Naive thymus-derived CD4-positive, alpha-beta T cell (primary cell): ENCODE measurements at regions of chr11 and their contacts with region 1.

Region 1: DNA sequence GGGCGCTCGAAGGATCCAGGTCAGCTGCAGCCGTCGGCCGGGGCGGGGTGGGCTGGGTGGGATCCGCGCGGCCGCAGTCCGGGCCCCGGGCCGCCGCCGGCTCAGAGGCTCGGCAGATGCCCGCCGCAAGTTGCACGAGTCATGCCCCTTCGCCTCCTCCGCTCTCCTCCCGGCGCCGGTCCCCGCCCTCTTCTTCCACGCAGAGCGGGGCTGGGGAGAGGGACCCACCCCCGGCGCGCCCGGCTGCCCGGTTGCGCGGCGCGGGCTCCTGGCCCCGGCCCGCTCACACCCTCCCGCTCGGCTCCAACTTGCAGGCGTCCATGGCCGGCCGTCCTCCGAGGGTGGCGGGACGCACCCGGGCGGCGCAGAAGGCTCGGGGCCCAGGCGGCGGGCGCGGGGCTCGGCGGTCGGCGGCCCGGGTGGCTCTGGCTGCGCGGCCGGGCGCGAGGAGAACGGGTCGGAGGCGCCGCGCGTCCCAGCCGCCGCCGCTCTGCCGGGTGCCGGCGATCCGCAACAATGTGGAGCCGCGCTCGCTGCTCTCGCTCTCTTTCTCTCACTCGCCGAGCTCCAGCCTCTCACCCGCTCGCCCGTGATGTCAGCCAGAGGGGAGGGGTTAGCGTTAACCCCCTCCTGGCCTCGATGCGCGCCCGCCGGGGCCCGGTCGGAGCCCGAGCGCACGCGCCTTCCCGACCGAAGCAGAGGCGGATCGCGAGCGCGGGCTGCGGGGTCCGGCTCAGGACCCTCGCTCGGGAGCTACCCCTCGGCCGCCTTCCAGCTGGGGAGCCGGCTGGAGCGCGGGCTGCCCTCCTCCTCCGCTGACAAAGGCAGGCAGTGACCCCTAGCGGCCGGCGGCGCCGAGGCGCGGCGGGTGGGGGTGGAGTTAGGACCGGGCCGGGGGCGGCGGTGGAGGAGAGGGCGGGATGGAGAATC is at the start of gene NECTIN1:
- DNase-seq: peak; percentile 75 to 93 (median 85)
- ATAC-seq: peak; percentile 93
- H3K4me3 ChIP-seq: peak within 1 kb of the TSS; percentile 69
- H3K4me3 Mint-ChIP-seq: peak within 1 kb of the TSS; percentile 87 to 97 (median 94)
- H3K27ac ChIP-seq: peak within 1 kb of the TSS; percentile 58
- H3K27ac Mint-ChIP-seq: peak within 1 kb of the TSS; percentile 34 to 87 (median 67)
- H3K4me1 ChIP-seq: peaks cover 17 to 21% of the 10 kb centered on the region in 2 donors
- H3K4me1 Mint-ChIP-seq: peaks cover 0 to 17% (median 13%) of the 10 kb centered on the region in 7 donors
- H3K27me3 ChIP-seq: peaks cover 0 to 4% of the 10 kb centered on the region in 2 donors
- H3K27me3 Mint-ChIP-seq: peaks cover 8 to 73% (median 17%) of the 10 kb centered on the region in 5 donors
- total RNA-seq, gene NECTIN1: 0.87 to 4.2 (median 2.4) TPM

Region 2: DNA sequence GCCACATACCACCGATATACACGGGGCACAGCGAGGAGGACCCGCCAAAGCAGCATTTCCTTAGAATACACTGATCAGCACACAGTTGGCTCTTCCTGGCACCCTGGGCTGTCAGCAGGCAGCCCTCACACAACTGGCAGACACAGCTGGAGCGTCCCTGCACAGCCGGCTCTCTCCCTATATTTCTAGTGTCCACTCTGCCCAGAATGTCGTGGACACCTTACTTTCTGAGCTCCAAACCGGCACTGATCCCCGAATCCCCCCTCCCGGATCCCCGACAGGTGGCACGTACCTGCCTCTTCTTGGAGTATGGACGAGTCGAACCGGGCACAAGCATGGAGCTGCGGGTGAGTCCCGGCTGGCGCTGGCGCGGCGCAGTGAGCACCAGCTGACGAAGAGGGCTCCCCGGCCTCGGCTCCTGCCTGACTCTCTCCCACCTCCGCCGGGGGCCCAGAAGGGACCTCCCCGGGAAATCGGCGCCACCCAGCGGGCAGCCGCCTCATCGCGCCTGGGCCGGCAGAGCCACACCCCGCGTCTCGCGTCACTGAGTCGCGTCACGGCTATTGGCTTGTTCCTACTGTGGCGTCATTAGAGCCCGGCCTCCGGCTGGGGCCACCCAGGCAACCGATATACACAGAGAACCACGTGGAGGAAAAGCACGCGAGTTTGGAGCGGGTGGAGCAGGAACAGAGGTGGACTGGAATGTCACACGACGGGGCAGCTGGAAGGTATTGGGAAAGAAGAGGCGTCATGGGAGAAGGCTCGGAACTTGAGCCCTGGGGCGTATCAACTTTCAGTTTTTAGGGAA is 347.5 kb before region 1 on chr11 and contains the start of gene USP2:
- CTCF ChIA-PET with region 1: no interaction called
- POLR2A ChIA-PET with region 1: no interaction called
- intact Hi-C with region 1: loop called in 1 of 2 experiments (anchors 1 kb)
- DNase-seq: peak; percentile 94 to 98 (median 97)
- ATAC-seq: peak; percentile 99
- H3K4me3 ChIP-seq: peak within 1 kb of the TSS; percentile 81
- H3K4me3 Mint-ChIP-seq: no peak within 1 kb of the TSS
- H3K27ac ChIP-seq: peak within 1 kb of the TSS; percentile 71
- H3K27ac Mint-ChIP-seq: peak within 1 kb of the TSS in 1 of 9 donors; percentile 87
- H3K4me1 ChIP-seq: peaks cover 9 to 14% of the 10 kb centered on the region in 2 donors
- H3K4me1 Mint-ChIP-seq: peaks cover 0 to 13% (median 5%) of the 10 kb centered on the region in 7 donors
- H3K27me3 ChIP-seq: no peaks in the 10 kb centered on the region
- H3K27me3 Mint-ChIP-seq: peaks cover 0 to 9% (median 0%) of the 10 kb centered on the region in 5 donors
- total RNA-seq, gene USP2: 0.07 to 1.1 (median 0.43) TPM

Region 3: GRCh38 chr11:119624102-119624615 is 104.8 kb before region 1 on chr11:
- CTCF ChIA-PET with region 1: interaction called, 4 read pairs
- POLR2A ChIA-PET with region 1: no interaction called
- intact Hi-C with region 1: loop called (anchors 1 kb)
- DNase-seq: no peak
- ATAC-seq: no peak
- H3K4me3 ChIP-seq: no peak overlapping the region
- H3K4me3 Mint-ChIP-seq: no peak overlapping the region
- H3K27ac ChIP-seq: no peak overlapping the region
- H3K27ac Mint-ChIP-seq: no peak overlapping the region
- H3K4me1 ChIP-seq: no peaks in the 10 kb centered on the region
- H3K4me1 Mint-ChIP-seq: peaks cover 0 to 3% (median 0%) of the 10 kb centered on the region in 7 donors
- H3K27me3 ChIP-seq: no peaks in the 10 kb centered on the region
- H3K27me3 Mint-ChIP-seq: peaks cover 0 to 24% (median 10%) of the 10 kb centered on the region in 5 donors

Region 4: GRCh38 chr11:119666463-119667131 is 62.3 kb before region 1 on chr11:
- CTCF ChIA-PET with region 1: no interaction called
- POLR2A ChIA-PET with region 1: no interaction called
- intact Hi-C with region 1: loop called (anchors 1 kb)
- DNase-seq: peak in 8 of 9 donors; percentile 11 to 62 (median 44)
- ATAC-seq: peak; percentile 87
- H3K4me3 ChIP-seq: no peak overlapping the region
- H3K4me3 Mint-ChIP-seq: no peak overlapping the region
- H3K27ac ChIP-seq: no peak overlapping the region
- H3K27ac Mint-ChIP-seq: no peak overlapping the region
- H3K4me1 ChIP-seq: no peaks in the 10 kb centered on the region
- H3K4me1 Mint-ChIP-seq: peaks cover 0 to 5% (median 0%) of the 10 kb centered on the region in 7 donors
- H3K27me3 ChIP-seq: no peaks in the 10 kb centered on the region
- H3K27me3 Mint-ChIP-seq: no peaks in the 10 kb centered on the region

Region 5: DNA sequence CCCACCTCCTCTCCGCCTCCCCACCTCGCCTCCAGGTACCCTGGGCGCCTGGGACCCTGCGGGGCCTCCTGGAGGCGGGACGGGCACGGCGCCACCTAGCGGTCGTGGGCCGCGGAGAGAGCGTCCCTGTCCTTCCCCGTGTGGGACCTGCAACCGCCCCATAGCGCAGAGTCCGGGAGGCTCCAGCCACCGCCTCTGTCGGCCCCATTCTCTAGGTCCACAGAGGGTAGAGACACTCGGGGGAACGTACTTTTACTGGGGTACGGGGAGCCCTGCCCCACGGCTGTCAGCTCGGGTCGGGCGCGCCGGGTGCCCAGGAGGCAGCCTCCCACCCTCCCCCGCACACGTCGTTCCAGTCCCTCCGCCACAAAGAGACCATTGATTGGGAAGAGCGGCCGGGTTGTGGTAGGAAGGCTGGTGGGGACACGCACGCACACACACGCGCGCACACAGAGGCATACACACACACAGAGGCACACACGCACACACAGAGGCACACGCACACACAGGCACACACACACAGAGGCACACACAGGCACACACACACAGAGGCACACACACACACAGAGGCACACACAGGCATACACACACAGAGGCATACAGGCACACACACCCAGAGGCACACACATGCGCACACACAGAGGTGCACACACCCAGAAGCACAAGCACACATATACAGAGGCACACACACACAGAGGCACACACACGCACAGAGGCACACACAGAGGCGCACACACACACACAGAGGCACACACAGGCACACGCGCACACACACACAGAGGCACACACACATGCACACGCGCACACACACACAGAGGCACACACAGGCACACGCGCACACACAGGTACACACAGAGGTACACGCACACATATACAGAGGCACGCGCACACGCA is 12.7 kb after region 1 on chr11:
- CTCF ChIA-PET with region 1: interaction called, 7 read pairs
- POLR2A ChIA-PET with region 1: no interaction called
- intact Hi-C with region 1: loop called in 1 of 2 experiments (anchors 1 kb)
- DNase-seq: peak in 7 of 9 donors; percentile 42 to 71 (median 57)
- ATAC-seq: peak; percentile 79
- H3K4me3 ChIP-seq: no peak overlapping the region
- H3K4me3 Mint-ChIP-seq: peak overlapping the region in 9 of 10 donors; percentile 6 to 85 (median 71)
- H3K27ac ChIP-seq: no peak overlapping the region
- H3K27ac Mint-ChIP-seq: peak overlapping the region in 2 of 9 donors; percentile 56 to 76
- H3K4me1 ChIP-seq: peaks cover 0 to 4% of the 10 kb centered on the region in 2 donors
- H3K4me1 Mint-ChIP-seq: peaks cover 6 to 16% (median 11%) of the 10 kb centered on the region in 7 donors
- H3K27me3 ChIP-seq: no peaks in the 10 kb centered on the region
- H3K27me3 Mint-ChIP-seq: peaks cover 42 to 62% (median 44%) of the 10 kb centered on the region in 5 donors

Region 6: DNA sequence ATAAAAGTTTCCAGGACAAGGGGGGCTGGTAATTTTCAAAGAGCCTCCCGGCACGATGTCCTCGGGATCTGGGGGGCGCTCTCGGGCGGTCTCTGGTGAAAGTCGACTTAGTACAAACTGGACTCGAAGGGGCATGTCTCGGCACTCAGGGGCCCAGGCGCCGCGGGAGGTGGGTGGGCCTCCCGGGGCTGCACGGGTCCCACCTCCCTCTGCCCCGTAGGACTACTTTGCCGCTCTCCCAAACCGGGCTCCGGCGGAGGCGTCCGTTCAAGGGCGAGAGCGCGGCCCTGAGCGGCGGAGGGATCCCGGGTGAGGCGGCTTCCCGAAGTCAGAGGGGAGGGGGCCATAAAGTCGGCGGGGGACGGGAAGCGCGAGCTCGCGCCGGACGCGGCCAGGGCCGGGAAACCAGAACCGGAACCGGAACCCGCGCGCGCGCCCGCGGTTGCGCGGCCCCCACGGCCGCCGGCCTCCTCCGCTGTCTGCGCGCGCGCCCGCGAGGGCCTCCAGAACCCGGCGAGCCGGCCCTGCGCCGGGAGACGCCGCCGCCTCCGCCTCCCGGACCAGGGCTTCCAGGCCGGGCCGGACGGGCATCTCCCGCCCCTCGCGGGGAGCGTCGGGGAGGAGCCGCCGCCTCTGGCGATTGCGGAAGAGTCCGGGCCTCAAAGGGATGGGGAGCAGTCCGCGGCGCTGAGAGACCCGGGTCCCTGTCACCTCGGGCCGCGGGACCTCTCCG is 607.2 kb after region 1 on chr11 and contains the start of gene ARHGEF12:
- CTCF ChIA-PET with region 1: no interaction called
- POLR2A ChIA-PET with region 1: no interaction called
- intact Hi-C with region 1: loop called in 1 of 2 experiments (anchors 10 kb)
- DNase-seq: peak; percentile 16 to 86 (median 47)
- ATAC-seq: peak; percentile 72
- H3K4me3 ChIP-seq: peak within 1 kb of the TSS; percentile 65
- H3K4me3 Mint-ChIP-seq: peak within 1 kb of the TSS; percentile 75 to 95 (median 87)
- H3K27ac ChIP-seq: no peak within 1 kb of the TSS
- H3K27ac Mint-ChIP-seq: peak within 1 kb of the TSS in 6 of 9 donors; percentile 8 to 82 (median 65)
- H3K4me1 ChIP-seq: peaks cover 13 to 22% of the 10 kb centered on the region in 2 donors
- H3K4me1 Mint-ChIP-seq: peaks cover 20 to 36% (median 31%) of the 10 kb centered on the region in 7 donors
- H3K27me3 ChIP-seq: peaks cover 0 to 26% of the 10 kb centered on the region in 2 donors
- H3K27me3 Mint-ChIP-seq: peaks cover 58 to 68% (median 63%) of the 10 kb centered on the region in 5 donors
- total RNA-seq, gene ARHGEF12: 1.9 to 13.1 (median 3.5) TPM